ENCODE measurements at regions of chr7 and their contacts with region 1.

Region 1: DNA sequence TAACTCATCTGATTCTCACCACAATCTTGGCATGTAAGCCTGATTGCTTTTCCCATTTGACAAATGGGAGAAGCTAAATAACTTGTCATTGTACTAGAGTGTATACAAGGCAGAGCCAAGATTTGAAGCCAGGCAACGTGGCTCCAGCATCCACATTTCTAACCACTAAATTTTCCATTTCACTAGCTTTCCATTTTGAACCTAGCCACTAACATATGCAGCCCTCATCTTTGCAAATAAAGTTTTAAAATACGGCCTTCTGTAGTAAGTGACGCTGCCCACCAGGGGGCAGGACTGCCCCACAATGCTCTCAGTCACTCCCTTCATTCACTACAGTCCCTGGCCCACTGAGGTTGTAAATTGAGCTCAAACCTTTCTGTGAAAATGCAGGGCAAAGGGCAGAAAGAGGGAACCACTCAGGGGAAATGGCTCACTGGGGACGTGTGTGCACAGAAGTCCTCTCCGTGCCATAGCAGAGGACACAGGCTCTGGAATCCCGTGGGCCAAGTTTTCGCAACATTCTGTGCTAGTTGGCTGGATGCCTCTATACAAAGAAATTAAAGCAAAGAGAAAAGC is 315.7 kb downstream of the TNS3 start:
- DNase-seq: peak; percentile 41 to 81 (median 71)
- ATAC-seq: peak; percentile 78 to 87
- H3K4me3 ChIP-seq: no peak overlapping the region
- H3K27ac ChIP-seq: peak overlapping the region; percentile 36
- H3K4me1 ChIP-seq: peaks cover 5% of the 10 kb centered on the region
- H3K27me3 ChIP-seq: no peaks in the 10 kb centered on the region

Region 2: GRCh38 chr7:47428092-47428767 is 162.0 kb after region 1 on chr7:
- intact Hi-C with region 1: loop called in 1 of 4 experiments (anchors 10 kb)
- DNase-seq: no peak
- ATAC-seq: peak; percentile 29 to 35
- H3K4me3 ChIP-seq: no peak overlapping the region
- H3K27ac ChIP-seq: no peak overlapping the region
- H3K4me1 ChIP-seq: no peaks in the 10 kb centered on the region
- H3K27me3 ChIP-seq: no peaks in the 10 kb centered on the region

Region 3: DNA sequence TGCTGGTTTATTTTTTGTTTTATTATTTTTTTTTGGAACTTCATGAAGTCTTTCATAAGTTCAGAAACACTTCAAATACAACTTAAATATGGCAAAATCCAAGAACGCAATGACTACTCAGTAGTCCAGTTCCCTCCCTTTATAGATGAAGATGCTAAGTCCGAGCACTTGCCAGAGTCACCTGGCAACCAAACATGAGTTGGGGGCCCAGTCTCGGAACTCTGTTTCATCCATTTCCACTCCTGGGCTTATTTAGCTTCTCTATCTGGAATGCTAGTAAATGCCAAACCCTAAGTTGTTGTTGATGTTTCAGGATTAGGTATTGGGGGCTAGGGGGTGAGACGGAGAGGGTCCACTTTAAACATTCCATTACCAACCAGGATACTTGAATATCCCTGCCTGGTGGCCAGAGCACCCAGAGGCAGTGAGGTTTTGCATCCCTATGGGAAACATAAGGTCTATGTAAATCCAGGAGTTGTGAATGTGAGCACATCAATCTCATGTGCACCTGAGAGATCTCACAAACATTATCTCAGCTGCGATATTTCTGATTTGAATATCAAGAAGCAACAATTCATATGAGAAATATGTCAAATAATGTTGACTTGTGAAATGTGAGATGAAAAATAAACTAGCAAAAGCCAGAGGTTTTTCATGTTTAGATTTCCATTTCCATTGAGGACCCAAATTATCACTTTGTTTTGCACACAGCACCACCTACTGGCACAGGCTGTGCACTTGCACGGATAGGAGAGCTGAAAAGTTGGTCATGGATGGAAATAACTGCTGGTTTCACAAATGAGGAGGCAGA is 552.8 kb after region 1 on chr7:
- intact Hi-C with region 1: loop called (anchors 5 to 10 kb)
- DNase-seq: peak; percentile 65 to 89 (median 75)
- ATAC-seq: peak; percentile 46 to 68
- H3K4me3 ChIP-seq: no peak overlapping the region
- H3K27ac ChIP-seq: no peak overlapping the region
- H3K4me1 ChIP-seq: peaks cover 4% of the 10 kb centered on the region
- H3K27me3 ChIP-seq: no peaks in the 10 kb centered on the region

Measured in right cardiac atrium (tissue), 5 donors.